ENCODE measurements at regions of chr16 and their contacts with region 1.

Region 1: DNA sequence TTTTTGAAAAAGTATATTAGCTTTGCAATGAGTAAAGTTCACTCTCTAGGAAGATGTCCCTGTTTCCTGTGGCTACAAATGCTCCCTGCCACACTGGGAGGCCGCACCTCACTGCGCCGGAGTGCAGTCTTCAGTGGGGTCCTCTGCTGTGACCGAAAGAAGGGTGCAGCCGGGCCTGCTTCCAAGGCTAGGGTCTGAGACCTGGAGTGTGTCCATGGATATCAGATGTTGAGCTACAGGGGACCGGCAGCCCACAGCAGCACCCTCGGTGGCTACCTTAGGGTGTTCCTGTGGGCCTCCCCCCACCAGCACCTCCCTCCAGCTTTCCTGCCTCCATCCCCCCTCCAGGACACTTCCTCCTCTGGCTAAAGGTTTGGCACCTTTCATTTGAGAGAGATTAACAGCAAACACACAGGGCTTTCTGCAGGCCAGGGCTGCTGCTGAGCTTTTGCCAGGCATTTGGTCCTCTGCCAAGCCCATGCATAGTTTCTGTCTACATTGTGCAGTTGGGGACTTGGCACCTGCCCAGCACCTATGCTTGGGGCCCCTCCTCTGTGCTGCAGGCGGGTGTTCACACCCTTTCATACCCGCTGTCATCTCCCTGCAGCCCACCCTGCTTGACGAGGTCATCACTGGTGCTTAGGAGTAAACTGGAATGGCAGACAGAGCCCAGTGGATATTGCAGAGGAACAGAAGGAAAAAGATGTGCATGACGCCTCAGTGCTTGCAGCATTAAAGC is 33.8 kb upstream of the CRISPLD2 start:
- ATAC-seq: peak in 5 of 8 experiments; percentile 12 to 87 (median 62)
- H3K4me3 ChIP-seq: no peak overlapping the region
- H3K27ac ChIP-seq: no peak overlapping the region
- H3K4me1 ChIP-seq: no peaks in the 10 kb centered on the region

Region 2: DNA sequence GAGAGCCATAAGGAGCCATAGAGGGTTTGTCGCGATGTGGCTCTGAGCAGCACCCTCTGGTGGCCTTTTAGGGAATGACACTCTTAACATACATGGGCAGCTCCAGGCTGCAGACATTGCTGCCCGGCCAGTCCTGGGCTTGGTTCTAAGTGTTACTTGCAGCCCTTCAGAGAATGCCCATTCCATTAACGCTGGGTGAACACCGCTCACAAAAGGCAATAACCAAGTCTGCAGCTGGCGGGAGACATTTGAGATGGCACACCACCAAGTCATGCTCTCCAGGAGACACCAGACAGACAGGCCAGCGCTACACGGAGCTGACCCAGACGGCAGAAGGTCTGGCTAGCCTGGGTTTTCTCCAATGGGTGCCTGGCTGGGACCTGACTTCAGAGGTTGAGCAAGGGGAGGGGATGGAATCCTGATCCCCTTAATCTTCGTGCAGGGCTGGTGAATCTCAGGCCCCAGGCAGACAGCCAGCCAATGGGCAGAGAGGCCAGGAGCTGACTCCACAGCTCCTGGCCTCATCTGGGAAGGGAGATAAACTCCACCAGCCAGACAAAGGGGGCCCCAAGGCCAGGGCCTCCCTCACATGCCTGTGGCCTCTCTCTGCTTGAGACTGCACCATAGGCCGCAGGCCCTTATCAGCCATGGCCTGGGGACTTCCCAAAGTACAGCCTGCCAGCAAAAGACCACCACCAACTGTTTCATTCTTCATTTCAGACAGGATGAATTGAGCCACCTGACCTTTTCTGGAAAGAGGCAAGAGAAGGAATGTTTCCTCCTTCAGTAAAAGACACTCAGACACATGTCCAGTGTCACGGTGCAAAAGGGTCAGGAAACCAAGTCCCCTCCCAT is 166.6 kb after region 1 on chr16:
- in situ Hi-C with region 1: loop called in 1 of 9 experiments (anchors 25 kb)
- ATAC-seq: peak; percentile 86 to 99 (median 90)
- H3K4me3 ChIP-seq: no peak overlapping the region
- H3K27ac ChIP-seq: peak overlapping the region in 1 of 2 donors; percentile 48
- H3K4me1 ChIP-seq: peaks cover 11 to 14% of the 10 kb centered on the region in 2 donors